HepG2 (cell line): ENCODE measurements at regions of chr2 and their contacts with region 1.

Region 1: DNA sequence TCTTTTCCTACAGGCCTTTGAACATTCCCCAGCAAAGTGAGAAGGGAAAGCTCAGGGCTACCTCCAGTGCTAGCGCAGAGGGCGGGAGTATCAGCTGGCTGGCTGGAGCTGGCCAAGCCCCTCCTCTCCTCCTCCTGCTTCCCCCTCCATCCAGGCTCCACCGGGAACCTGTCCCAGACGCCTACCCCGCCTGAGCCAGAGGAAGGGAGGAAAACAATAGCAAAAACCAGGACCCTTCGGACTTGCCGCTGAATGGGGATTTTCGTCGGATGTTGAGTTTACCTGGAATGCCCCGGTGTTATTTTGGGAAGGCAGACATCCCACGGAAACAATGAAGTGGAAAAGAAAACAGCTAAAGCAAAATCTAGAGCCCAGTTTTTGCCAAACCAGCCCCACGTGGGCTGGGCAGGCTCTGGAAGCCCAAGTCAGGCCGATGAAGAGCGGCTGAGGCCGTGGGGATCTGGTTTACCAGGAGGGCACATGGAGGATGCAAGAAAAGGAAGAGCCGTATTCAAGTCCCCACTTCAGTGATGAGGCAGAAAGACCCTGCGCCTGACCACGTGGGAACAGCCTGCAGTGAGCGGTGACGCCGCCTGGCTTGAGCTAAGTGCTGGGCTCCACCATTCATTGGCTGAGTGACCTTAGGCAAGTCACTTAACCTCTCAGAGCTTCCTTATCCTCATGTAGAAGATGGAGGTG is 100.4 kb upstream of the LCLAT1 start:
- DNase-seq: no peak
- ATAC-seq: no peak
- H3K4me3 ChIP-seq: no peak overlapping the region
- H3K27ac ChIP-seq: no peak overlapping the region
- H3K4me1 ChIP-seq: no peaks in the 10 kb centered on the region
- H3K27me3 ChIP-seq: peaks cover 0 to 20% of the 10 kb centered on the region in 2 experiments; a peak in 3 of 5 replicates
- CTCF ChIP-seq: no peak
- EP300 ChIP-seq: no peak
- POLR2A ChIP-seq: no peak
- RAD21 ChIP-seq: no peak

Region 2: DNA sequence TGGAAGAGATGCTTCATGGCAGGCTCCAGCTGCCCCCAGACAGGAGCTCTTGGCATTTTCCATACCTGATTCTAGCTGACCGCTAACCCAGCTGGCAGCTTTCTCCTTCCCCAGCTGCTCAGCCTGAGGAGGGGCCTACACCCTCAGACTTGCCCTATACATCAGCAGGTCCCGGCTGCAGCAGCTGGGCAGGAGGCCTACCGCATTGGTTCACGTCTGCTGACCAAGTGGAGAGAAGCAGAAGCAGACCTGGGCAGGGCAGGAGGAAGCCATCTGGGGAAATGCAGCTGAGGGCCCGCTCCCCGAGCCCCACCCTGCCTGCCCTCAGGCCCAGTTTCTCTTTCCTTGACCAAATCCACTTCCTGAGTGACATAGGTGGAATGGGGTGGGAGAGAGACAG is 64.5 kb before region 1 on chr2:
- CTCF ChIA-PET with region 1: no interaction called
- POLR2A ChIA-PET with region 1: no interaction called
- in situ Hi-C with region 1: no loop called
- intact Hi-C with region 1: no loop called
- DNase-seq: no peak
- ATAC-seq: no peak
- H3K4me3 ChIP-seq: no peak overlapping the region
- H3K27ac ChIP-seq: no peak overlapping the region
- H3K4me1 ChIP-seq: no peaks in the 10 kb centered on the region
- H3K27me3 ChIP-seq: peaks cover 0 to 17% of the 10 kb centered on the region in 2 experiments; a peak in 4 of 5 replicates
- CTCF ChIP-seq: no peak
- EP300 ChIP-seq: no peak
- POLR2A ChIP-seq: no peak
- RAD21 ChIP-seq: no peak

Region 3: GRCh38 chr2:30436859-30437435 is 90.3 kb after region 1 on chr2:
- CTCF ChIA-PET with region 1: no interaction called
- POLR2A ChIA-PET with region 1: no interaction called
- in situ Hi-C with region 1: no loop called
- intact Hi-C with region 1: no loop called
- DNase-seq: no peak
- ATAC-seq: no peak
- H3K4me3 ChIP-seq: no peak overlapping the region
- H3K27ac ChIP-seq: no peak overlapping the region
- H3K4me1 ChIP-seq: peaks cover 23% of the 10 kb centered on the region
- H3K27me3 ChIP-seq: no peaks in the 10 kb centered on the region
- CTCF ChIP-seq: no peak
- EP300 ChIP-seq: no peak
- POLR2A ChIP-seq: no peak
- RAD21 ChIP-seq: no peak

Region 4: GRCh38 chr2:31221544-31221943 is 874.9 kb after region 1 on chr2:
- CTCF ChIA-PET with region 1: no interaction called
- POLR2A ChIA-PET with region 1: no interaction called
- in situ Hi-C with region 1: no loop called
- intact Hi-C with region 1: loop called (anchors 5 kb)
- DNase-seq: no peak
- ATAC-seq: no peak
- H3K4me3 ChIP-seq: no peak overlapping the region
- H3K27ac ChIP-seq: no peak overlapping the region
- H3K4me1 ChIP-seq: no peaks in the 10 kb centered on the region
- H3K27me3 ChIP-seq: peaks cover 0 to 32% of the 10 kb centered on the region in 2 experiments; a peak in 3 of 5 replicates
- CTCF ChIP-seq: no peak
- EP300 ChIP-seq: no peak
- POLR2A ChIP-seq: no peak
- RAD21 ChIP-seq: no peak